ENCODE measurements at regions of chr3 and their contacts with region 1.

Region 1: GRCh38 chr3:185282696-185283394 is 29.0 kb upstream of the EHHADH start:
- DNase-seq: peak; percentile 98
- H3K4me3 Mint-ChIP-seq: peak overlapping the region; percentile 99
- H3K27ac Mint-ChIP-seq: peak overlapping the region; percentile 93
- H3K4me1 Mint-ChIP-seq: peaks cover 18% of the 10 kb centered on the region
- H3K27me3 Mint-ChIP-seq: peaks cover 10% of the 10 kb centered on the region

Region 2: GRCh38 chr3:184874709-184875644 is 407.9 kb before region 1 on chr3:
- intact Hi-C with region 1: loop called (anchors 10 kb)
- DNase-seq: peak; percentile 69
- H3K4me3 Mint-ChIP-seq: no peak overlapping the region
- H3K27ac Mint-ChIP-seq: no peak overlapping the region
- H3K4me1 Mint-ChIP-seq: peaks cover 14% of the 10 kb centered on the region
- H3K27me3 Mint-ChIP-seq: no peaks in the 10 kb centered on the region

Region 3: DNA sequence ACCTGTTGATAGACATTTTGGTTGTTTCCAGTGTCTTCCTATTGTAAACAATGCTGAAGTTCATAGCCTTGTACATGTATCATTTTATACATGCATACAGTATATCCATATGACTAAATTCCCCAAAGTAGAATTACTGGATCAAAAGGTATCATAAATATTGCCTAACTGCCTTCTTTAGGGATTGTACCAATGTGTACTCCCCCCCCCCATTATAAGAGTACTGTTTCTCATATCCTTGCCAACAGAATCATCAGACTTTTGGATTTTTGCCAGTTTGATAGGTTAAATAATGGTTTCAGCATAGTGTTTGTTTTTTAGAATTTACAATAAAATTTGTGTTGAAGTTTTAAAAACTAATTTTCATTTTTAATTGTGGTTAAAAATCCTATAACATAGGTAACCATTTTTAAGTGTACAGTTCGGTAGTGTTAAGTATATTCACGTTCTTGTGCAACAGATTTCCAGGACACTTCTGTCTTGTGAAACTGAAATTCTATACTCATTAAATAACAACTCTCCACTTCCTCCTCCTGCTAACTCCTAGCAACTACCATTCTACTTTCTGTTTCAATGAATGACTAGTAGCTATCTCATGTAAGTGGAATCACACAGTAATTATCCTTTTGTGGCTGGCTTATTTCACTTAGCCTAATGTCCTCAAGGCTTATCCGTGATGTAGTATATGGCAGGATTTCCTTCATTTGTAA is 49.3 kb after region 1 on chr3:
- intact Hi-C with region 1: loop called (anchors 5 kb)
- DNase-seq: no peak
- H3K4me3 Mint-ChIP-seq: peak overlapping the region; percentile 26
- H3K27ac Mint-ChIP-seq: no peak overlapping the region
- H3K4me1 Mint-ChIP-seq: peaks cover 22% of the 10 kb centered on the region
- H3K27me3 Mint-ChIP-seq: peaks cover 4% of the 10 kb centered on the region

Region 4: GRCh38 chr3:185448107-185448506 is 165.3 kb after region 1 on chr3:
- intact Hi-C with region 1: no loop called
- DNase-seq: no peak
- H3K4me3 Mint-ChIP-seq: no peak overlapping the region
- H3K27ac Mint-ChIP-seq: no peak overlapping the region
- H3K4me1 Mint-ChIP-seq: peaks cover 2% of the 10 kb centered on the region
- H3K27me3 Mint-ChIP-seq: no peaks in the 10 kb centered on the region

Region 5: DNA sequence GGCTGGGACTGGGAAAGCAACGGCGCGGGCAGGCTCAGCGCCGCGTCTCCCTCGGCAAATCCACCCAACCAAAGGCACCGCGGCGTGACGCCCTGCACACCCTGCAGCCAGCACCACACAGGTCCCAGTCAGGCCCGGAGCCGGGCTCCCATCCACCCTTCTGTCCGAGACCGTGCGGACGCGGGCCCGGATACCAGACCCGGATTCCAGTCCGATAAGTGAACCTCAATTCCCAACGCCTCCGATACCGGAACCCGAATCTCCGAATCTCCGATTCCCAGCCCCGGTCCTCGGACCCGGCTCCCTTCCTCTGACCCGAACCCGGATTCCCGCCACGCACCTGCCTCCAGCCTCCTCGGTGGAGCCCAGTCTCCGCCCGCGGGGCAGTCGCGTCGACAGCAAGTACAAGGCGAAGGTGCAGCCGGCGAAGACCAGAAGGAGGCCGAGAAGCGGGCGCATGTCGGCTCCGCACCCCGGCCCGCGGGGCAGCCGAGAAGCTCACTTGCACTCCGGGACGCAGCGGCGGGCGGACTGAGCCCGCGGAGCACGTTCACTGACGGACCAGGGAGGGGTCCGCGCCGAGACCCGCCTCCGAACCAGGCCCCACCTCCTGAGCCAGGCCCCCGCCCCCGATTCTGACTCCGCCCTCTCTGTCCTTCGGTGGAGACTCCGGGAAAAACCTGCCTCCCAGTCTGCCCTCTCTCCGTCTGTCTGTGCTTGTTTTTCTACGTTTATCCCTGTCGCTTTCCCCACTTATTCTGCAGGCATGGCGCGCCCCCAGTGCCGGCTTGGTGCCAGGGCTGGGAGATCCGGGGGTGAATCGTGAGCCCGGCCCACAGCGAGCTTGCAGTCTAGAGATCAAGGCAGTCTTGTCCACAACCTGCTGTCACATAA is 215.9 kb after region 1 on chr3 and contains the start of gene TMEM41A:
- intact Hi-C with region 1: loop called (anchors 1 kb)
- DNase-seq: peak; percentile 97
- H3K4me3 Mint-ChIP-seq: peak within 1 kb of the TSS; percentile 98
- H3K27ac Mint-ChIP-seq: peak within 1 kb of the TSS; percentile 91
- H3K4me1 Mint-ChIP-seq: peaks cover 20% of the 10 kb centered on the region
- H3K27me3 Mint-ChIP-seq: peaks cover 9% of the 10 kb centered on the region
- total RNA-seq, gene TMEM41A: 25.4 and 25.8 TPM in 2 replicates

Region 6: GRCh38 chr3:185585859-185586685 is 303.2 kb after region 1 on chr3 and contains the start of gene SENP2:
- intact Hi-C with region 1: loop called (anchors 2 kb)
- DNase-seq: peak; percentile 100
- H3K4me3 Mint-ChIP-seq: peak within 1 kb of the TSS; percentile 80
- H3K27ac Mint-ChIP-seq: peak within 1 kb of the TSS; percentile 90
- H3K4me1 Mint-ChIP-seq: peaks cover 21% of the 10 kb centered on the region
- H3K27me3 Mint-ChIP-seq: peaks cover 3% of the 10 kb centered on the region
- total RNA-seq, gene SENP2: 37.8 and 41.9 TPM in 2 replicates